Activated CD4-positive, alpha-beta T cell treated with anti-CD3 and anti-CD28 coated beads for 36 hours (primary cell): ENCODE measurements at regions of chr10 and their contacts with region 1.

Region 1: GRCh38 chr10:118459726-118460193 is 117.6 kb upstream of the FAM204A start:
- DNase-seq: peak; percentile 69
- ATAC-seq: peak; percentile 84
- H3K4me3 Mint-ChIP-seq: no peak overlapping the region
- H3K27ac Mint-ChIP-seq: no peak overlapping the region
- H3K4me1 Mint-ChIP-seq: peaks cover 4% of the 10 kb centered on the region
- H3K27me3 Mint-ChIP-seq: peaks cover 27% of the 10 kb centered on the region

Region 2: DNA sequence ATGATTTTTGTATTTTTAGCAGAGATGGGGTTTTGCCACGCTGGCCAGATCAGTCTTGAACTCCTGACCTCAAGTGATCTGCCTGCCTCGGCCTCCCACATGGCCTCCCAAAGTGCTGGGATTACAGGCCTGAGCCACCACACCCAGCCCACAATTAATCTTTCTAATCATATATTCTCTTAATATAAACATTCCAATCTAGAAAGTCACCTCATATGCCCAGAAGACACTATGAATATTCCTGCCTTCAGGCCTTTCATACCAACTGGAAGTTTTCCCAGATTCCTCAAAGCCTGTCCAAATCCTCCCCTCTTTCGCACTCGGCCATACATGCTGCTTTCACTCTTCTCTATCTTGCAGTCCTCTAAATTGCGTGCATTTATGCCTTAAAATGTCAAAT is 1117.1 kb before region 1 on chr10:
- CTCF ChIA-PET with region 1: no interaction called
- POLR2A ChIA-PET with region 1: no interaction called
- intact Hi-C with region 1: no loop called
- DNase-seq: no peak
- ATAC-seq: no peak
- H3K4me3 Mint-ChIP-seq: no peak overlapping the region
- H3K27ac Mint-ChIP-seq: no peak overlapping the region
- H3K4me1 Mint-ChIP-seq: peaks cover 31% of the 10 kb centered on the region
- H3K27me3 Mint-ChIP-seq: no peaks in the 10 kb centered on the region

Region 3: DNA sequence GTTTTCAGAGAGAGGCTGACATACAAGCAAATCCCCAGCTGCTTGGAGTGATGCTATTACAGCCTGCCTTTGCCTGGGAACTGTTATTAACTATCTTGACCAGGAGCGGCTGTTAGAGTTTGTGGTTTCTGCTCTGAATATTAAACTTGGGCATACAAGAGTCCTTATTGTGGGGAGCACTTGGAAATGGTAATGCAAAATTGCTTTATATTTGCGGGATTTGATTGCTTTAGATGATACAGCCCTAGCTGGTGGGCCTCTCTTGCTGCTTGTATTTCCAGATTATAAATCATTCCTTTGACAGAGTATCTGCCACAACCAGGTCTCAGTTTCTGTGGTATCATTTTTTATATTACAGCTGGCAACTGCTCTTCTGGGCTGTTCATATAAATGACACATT is 15.7 kb before region 1 on chr10:
- CTCF ChIA-PET with region 1: interaction called, 13 read pairs
- POLR2A ChIA-PET with region 1: no interaction called
- intact Hi-C with region 1: no loop called
- DNase-seq: no peak
- ATAC-seq: no peak
- H3K4me3 Mint-ChIP-seq: no peak overlapping the region
- H3K27ac Mint-ChIP-seq: no peak overlapping the region
- H3K4me1 Mint-ChIP-seq: no peaks in the 10 kb centered on the region
- H3K27me3 Mint-ChIP-seq: peaks cover 19% of the 10 kb centered on the region